ENCODE measurements at regions of chr12 and their contacts with region 1.

Region 1: DNA sequence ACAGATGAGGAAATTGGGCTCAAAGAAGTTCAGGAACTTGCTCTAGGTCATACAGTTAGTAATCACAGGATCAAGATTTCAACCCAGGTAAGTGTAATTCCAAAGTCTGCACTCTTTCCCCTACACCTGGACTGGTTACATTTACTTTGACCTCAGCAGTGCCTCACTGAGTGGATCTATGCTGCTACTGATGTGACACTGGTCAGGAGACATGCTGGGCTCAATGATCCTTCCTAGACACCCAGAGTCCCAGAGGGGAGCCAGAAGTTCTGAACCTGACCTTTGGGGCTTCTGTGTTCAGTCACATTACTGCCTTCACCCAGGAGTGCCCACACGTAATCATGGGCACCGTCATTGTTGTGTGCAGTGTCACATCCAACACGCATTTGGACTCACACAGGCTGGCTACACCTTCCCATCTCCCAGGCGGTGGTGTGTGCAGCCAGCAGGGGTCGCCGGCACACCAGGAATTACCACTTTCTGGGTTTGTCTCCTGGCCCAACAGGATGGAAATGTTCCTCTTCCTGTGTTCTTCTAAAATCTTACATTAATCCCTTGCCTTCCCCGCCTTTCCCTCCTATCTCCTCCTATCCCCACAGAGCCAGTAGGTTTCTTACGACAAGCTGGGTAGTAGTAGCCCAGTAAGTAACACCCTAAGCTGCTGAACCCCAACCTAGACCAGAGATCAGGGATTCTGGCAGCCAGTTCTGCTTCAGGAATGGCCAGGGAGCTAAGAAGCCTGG is 25.6 kb downstream of the CALCOCO1 start:
- DNase-seq: peak; percentile 80
- H3K4me3 ChIP-seq: no peak overlapping the region; a peak in 1 of 4 replicates
- H3K27ac ChIP-seq: no peak overlapping the region
- H3K4me1 ChIP-seq: no peaks in the 10 kb centered on the region
- H3K27me3 ChIP-seq: peaks cover 79% of the 10 kb centered on the region
- CTCF ChIP-seq: peak; percentile 92
- EP300 ChIP-seq: no peak
- RAD21 ChIP-seq: peak; percentile 95

Region 2: DNA sequence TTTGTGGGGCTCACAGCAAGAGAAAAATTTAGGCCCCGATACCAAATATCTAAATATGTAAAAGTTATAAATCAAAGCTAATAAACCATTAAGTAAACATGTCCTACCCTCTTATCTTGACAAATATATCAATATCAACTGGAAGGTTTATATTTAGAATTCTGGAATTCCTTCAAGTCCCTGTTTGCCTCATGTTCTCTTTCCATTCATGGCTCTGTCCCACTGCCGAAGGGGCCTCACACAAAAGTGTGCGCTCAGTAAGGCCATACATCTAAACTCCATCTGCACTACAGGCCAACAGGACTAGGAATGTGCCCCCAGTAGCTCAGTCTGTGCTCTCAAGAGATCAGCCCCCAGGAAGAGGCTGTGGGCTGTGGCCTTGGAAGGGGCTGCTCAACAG is 15.3 kb before region 1 on chr12:
- CTCF ChIA-PET with region 1: interaction called, 12 read pairs
- POLR2A ChIA-PET with region 1: no interaction called
- DNase-seq: no peak
- H3K4me3 ChIP-seq: no peak overlapping the region
- H3K27ac ChIP-seq: no peak overlapping the region
- H3K4me1 ChIP-seq: no peaks in the 10 kb centered on the region
- H3K27me3 ChIP-seq: peaks cover 14% of the 10 kb centered on the region; the same call in 1 of the 2 replicates
- CTCF ChIP-seq: no peak
- EP300 ChIP-seq: no peak
- RAD21 ChIP-seq: no peak

Region 3: DNA sequence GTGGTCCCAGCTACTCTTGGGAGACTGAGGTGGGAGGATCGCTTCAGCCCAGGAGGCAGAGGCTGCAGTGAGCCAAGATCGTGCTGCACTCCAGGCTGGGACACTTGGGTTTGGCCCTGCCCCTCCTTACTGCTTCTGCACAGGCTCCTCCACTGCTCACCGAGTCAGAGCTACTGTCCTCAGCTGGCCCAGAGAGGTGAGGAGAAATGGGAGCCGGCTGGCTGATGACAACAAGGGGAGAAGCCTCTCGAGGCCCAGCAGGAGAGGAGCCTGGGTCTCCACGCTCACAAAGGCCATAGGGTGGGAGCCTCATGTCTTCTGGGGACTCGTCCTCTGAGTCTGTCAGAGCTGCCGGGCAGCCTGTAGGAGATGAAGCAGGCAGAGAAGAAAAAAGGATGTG is 11.9 kb after region 1 on chr12:
- CTCF ChIA-PET with region 1: interaction called, 22 read pairs
- POLR2A ChIA-PET with region 1: no interaction called
- DNase-seq: no peak
- H3K4me3 ChIP-seq: no peak overlapping the region
- H3K27ac ChIP-seq: no peak overlapping the region
- H3K4me1 ChIP-seq: no peaks in the 10 kb centered on the region
- H3K27me3 ChIP-seq: peaks cover 5% of the 10 kb centered on the region
- CTCF ChIP-seq: no peak
- EP300 ChIP-seq: no peak
- RAD21 ChIP-seq: no peak

Region 4: GRCh38 chr12:53719649-53720048 is 18.0 kb after region 1 on chr12:
- CTCF ChIA-PET with region 1: interaction called, 22 read pairs
- POLR2A ChIA-PET with region 1: no interaction called
- DNase-seq: no peak
- H3K4me3 ChIP-seq: no peak overlapping the region
- H3K27ac ChIP-seq: no peak overlapping the region
- H3K4me1 ChIP-seq: no peaks in the 10 kb centered on the region
- H3K27me3 ChIP-seq: no peaks in the 10 kb centered on the region
- CTCF ChIP-seq: no peak
- EP300 ChIP-seq: no peak
- RAD21 ChIP-seq: no peak

Region 5: GRCh38 chr12:53727310-53728041 is 25.8 kb after region 1 on chr12 and contains the start of gene CALCOCO1:
- CTCF ChIA-PET with region 1: interaction called, 61 read pairs
- POLR2A ChIA-PET with region 1: no interaction called
- DNase-seq: peak; percentile 96
- H3K4me3 ChIP-seq: peak within 1 kb of the TSS; percentile 83 to 93
- H3K27ac ChIP-seq: peak within 1 kb of the TSS in 1 of 2 experiments; percentile 79; a peak in 2 of 4 replicates
- H3K4me1 ChIP-seq: peaks cover 5 to 12% of the 10 kb centered on the region in 2 experiments; a peak in 3 of 4 replicates
- H3K27me3 ChIP-seq: peaks cover 6% of the 10 kb centered on the region; the same call in 1 of the 2 replicates
- CTCF ChIP-seq: no peak
- EP300 ChIP-seq: no peak
- RAD21 ChIP-seq: no peak
- polyA plus RNA-seq, gene CALCOCO1: 72.1 and 130 TPM in 2 replicates

Region 6: DNA sequence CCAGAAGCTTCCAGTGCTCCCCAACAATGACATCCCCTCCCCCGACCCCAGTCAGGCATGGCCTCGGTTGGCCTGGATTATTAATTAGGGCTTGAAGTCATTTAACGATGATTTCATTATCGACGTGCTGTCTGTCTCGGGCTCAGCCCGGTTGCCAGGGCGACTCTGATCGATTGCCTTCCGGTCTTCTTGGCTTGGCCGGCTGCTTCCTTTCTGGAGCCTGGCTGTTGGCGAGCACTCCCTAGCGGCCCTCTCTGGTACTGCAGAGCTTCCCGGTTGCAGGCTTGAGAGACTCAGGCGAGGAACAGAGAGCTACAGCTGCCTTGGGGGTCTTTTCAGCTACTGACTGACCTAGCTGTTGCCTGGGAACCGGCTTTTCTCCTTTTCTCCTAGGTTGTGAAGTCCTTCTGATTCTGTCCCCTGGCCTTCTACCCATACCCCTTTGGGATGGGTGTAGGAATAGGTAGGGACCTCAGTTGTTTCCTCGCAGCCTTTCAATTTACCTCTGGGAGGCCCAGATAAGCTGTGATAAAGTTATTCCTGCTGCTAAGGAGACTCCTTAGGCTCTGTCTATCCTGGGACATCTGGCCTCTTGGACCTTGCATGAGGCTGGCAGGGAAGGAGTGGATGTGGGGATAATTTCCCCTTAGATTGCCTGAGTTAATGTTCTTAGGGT is 55.5 kb after region 1 on chr12:
- CTCF ChIA-PET with region 1: interaction called, 90 read pairs
- POLR2A ChIA-PET with region 1: no interaction called
- DNase-seq: peak; percentile 79
- H3K4me3 ChIP-seq: no peak overlapping the region; a peak in 1 of 4 replicates
- H3K27ac ChIP-seq: no peak overlapping the region
- H3K4me1 ChIP-seq: peaks cover 2 to 9% of the 10 kb centered on the region in 2 experiments; a peak in 1 of 4 replicates
- H3K27me3 ChIP-seq: peaks cover 87% of the 10 kb centered on the region
- CTCF ChIP-seq: peak; percentile 81
- EP300 ChIP-seq: no peak
- RAD21 ChIP-seq: peak; percentile 35

Region 7: DNA sequence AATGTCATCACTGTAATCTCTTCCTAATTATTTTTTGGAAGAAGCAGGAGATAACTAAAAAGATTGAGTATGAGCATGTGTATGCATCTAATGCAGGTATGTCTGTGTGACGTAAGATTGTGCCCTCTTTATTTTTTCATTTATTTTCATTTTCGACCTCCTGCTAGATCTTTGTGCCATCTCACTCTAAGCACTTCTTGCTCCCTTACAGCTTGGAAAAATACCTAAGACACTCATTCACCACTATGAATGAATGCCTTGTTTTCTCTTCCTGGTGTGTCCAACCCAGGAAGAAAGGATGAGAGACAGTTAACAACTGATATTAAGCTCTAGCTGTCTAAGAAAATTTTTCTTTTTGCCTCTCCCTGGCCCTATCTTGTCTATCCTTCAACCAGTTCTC is 126.9 kb after region 1 on chr12:
- CTCF ChIA-PET with region 1: no interaction called
- POLR2A ChIA-PET with region 1: no interaction called
- DNase-seq: no peak
- H3K4me3 ChIP-seq: no peak overlapping the region
- H3K27ac ChIP-seq: no peak overlapping the region
- H3K4me1 ChIP-seq: no peaks in the 10 kb centered on the region
- H3K27me3 ChIP-seq: peaks cover 22% of the 10 kb centered on the region; the same call in 1 of the 2 replicates
- CTCF ChIP-seq: no peak
- EP300 ChIP-seq: no peak
- RAD21 ChIP-seq: no peak

Region 8: GRCh38 chr12:54201001-54201794 is 499.5 kb after region 1 on chr12:
- CTCF ChIA-PET with region 1: no interaction called
- POLR2A ChIA-PET with region 1: no interaction called
- DNase-seq: peak; percentile 88
- H3K4me3 ChIP-seq: peak overlapping the region in 1 of 2 experiments; percentile 16; a peak in 1 of 4 replicates
- H3K27ac ChIP-seq: no peak overlapping the region
- H3K4me1 ChIP-seq: peaks cover 5 to 13% of the 10 kb centered on the region in 2 experiments; a peak in 2 of 4 replicates
- H3K27me3 ChIP-seq: peaks cover 16% of the 10 kb centered on the region; the same call in 1 of the 2 replicates
- CTCF ChIP-seq: peak; percentile 92
- EP300 ChIP-seq: no peak
- RAD21 ChIP-seq: peak; percentile 85

Measured in SK-N-SH (cell line).